CD4-positive, alpha-beta memory T cell (primary cell): ENCODE measurements at regions of chr6 and their contacts with region 1.

Region 1: DNA sequence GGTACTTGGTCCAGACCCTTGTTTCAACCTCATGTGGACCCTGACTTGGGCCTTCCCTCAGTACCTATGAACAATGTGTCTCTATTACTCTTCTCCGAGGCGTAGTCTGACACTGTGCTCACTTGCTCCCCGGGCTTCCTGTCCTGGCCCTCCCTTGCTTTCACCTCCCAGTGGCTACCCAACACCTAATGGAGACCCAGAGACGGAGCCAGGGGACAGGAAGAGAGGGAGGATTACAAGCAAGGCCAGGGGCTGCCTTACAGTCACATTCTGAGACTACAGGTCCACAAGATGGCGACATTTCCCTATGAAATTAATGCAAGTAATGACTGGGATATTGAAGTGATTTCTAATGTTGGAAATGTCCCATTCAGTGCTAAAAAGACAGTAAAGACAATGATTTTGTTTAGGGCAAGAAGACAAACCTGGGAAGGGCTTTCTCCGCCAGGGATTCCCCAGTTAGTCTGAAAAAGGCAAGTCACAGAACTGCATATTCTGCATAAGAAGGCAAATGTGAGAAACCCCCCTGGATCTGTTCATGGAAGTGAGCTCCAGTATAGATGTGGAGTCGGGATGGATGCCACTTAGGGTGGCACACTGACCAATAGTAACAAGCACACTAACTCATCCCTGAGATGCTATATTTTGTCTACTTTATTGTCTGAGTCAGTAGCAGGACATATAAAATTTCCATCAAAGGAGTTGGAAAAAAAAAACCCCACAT is 44.0 kb upstream of the ZBTB24 start:
- DNase-seq: peak; percentile 48 to 64 (median 52)
- H3K4me3 ChIP-seq: no peak overlapping the region
- H3K4me3 Mint-ChIP-seq: no peak overlapping the region
- H3K27ac ChIP-seq: no peak overlapping the region
- H3K27ac Mint-ChIP-seq: peak overlapping the region in 2 of 7 donors; percentile 2 to 52
- H3K4me1 ChIP-seq: no peaks in the 10 kb centered on the region
- H3K4me1 Mint-ChIP-seq: peaks cover 0 to 3% (median 0%) of the 10 kb centered on the region in 4 donors
- H3K27me3 ChIP-seq: no peaks in the 10 kb centered on the region
- H3K27me3 Mint-ChIP-seq: peaks cover 0 to 3% of the 10 kb centered on the region in 2 donors

Region 2: GRCh38 chr6:109508166-109508860 is 18.8 kb before region 1 on chr6:
- CTCF ChIA-PET with region 1: no interaction called
- POLR2A ChIA-PET with region 1: no interaction called
- intact Hi-C with region 1: no loop called
- DNase-seq: no peak
- H3K4me3 ChIP-seq: no peak overlapping the region
- H3K4me3 Mint-ChIP-seq: no peak overlapping the region
- H3K27ac ChIP-seq: no peak overlapping the region
- H3K27ac Mint-ChIP-seq: no peak overlapping the region
- H3K4me1 ChIP-seq: no peaks in the 10 kb centered on the region
- H3K4me1 Mint-ChIP-seq: no peaks in the 10 kb centered on the region
- H3K27me3 ChIP-seq: no peaks in the 10 kb centered on the region
- H3K27me3 Mint-ChIP-seq: peaks cover 0 to 1% of the 10 kb centered on the region in 2 donors

Region 3: DNA sequence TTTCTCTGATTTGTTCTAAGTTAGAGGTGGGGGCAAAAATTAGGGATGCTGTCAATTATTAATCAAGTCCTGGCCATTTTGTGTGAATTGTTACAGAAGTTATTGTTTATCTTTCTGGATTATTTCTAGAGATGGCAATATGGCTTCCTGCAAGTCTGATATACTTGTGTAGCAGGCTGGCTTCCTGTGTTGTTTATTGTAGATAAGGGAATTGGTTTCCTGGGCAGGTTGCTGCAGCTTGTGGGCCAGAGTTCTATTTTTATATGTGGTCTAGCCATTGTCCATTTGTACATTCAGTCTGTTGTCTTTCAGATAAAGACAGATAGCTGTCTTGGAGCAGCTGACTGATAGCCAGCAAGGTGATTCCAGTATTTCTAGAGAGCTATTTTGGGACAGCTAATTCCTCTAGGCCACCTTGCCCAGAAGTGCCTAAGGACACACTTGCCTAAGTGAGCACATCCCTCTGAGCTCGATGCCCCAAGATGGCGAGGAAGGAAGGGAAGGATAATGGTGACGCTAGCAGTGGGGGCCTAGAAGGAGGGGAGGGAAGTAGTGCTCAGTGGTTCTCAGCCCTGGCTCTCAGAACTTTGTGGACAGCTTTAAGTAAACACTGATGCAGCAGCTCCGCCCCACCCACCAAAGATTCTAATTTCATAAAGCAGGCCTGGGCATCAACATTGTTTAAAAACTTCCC is 862.8 kb after region 1 on chr6:
- CTCF ChIA-PET with region 1: interaction called, 4 read pairs
- POLR2A ChIA-PET with region 1: no interaction called
- intact Hi-C with region 1: loop called (anchors 1 kb)
- DNase-seq: no peak
- H3K4me3 ChIP-seq: no peak overlapping the region
- H3K4me3 Mint-ChIP-seq: peak overlapping the region in 1 of 8 donors; percentile 7
- H3K27ac ChIP-seq: no peak overlapping the region
- H3K27ac Mint-ChIP-seq: peak overlapping the region in 2 of 7 donors; percentile 43 to 74
- H3K4me1 ChIP-seq: no peaks in the 10 kb centered on the region
- H3K4me1 Mint-ChIP-seq: peaks cover 3 to 13% (median 11%) of the 10 kb centered on the region in 4 donors
- H3K27me3 ChIP-seq: no peaks in the 10 kb centered on the region
- H3K27me3 Mint-ChIP-seq: no peaks in the 10 kb centered on the region